ENCODE measurements at regions of chr9 and their contacts with region 1.

Region 1: GRCh38 chr9:89597711-89598625 is 6.8 kb upstream of the GADD45G start:
- DNase-seq: peak; percentile 73
- ATAC-seq: peak; percentile 55
- H3K4me3 Mint-ChIP-seq: no peak overlapping the region
- H3K27ac Mint-ChIP-seq: no peak overlapping the region
- H3K4me1 Mint-ChIP-seq: peaks cover 2% of the 10 kb centered on the region
- H3K27me3 Mint-ChIP-seq: peaks cover 50% of the 10 kb centered on the region

Region 2: GRCh38 chr9:89000973-89001916 is 596.7 kb before region 1 on chr9:
- CTCF ChIA-PET with region 1: no interaction called
- DNase-seq: peak; percentile 81
- ATAC-seq: peak; percentile 63
- H3K4me3 Mint-ChIP-seq: no peak overlapping the region
- H3K27ac Mint-ChIP-seq: no peak overlapping the region
- H3K4me1 Mint-ChIP-seq: peaks cover 2% of the 10 kb centered on the region
- H3K27me3 Mint-ChIP-seq: peaks cover 20% of the 10 kb centered on the region

Region 3: GRCh38 chr9:89576404-89576839 is 21.5 kb before region 1 on chr9:
- CTCF ChIA-PET with region 1: interaction called, 25 read pairs
- DNase-seq: no peak
- ATAC-seq: no peak
- H3K4me3 Mint-ChIP-seq: no peak overlapping the region
- H3K27ac Mint-ChIP-seq: no peak overlapping the region
- H3K4me1 Mint-ChIP-seq: peaks cover 22% of the 10 kb centered on the region
- H3K27me3 Mint-ChIP-seq: peaks cover 69% of the 10 kb centered on the region

Region 4: GRCh38 chr9:89919169-89919681 is 321.3 kb after region 1 on chr9:
- CTCF ChIA-PET with region 1: interaction called, 50 read pairs
- DNase-seq: peak; percentile 68
- ATAC-seq: peak; percentile 92
- H3K4me3 Mint-ChIP-seq: no peak overlapping the region
- H3K27ac Mint-ChIP-seq: no peak overlapping the region
- H3K4me1 Mint-ChIP-seq: peaks cover 9% of the 10 kb centered on the region
- H3K27me3 Mint-ChIP-seq: peaks cover 36% of the 10 kb centered on the region

Region 5: GRCh38 chr9:89999534-90000370 is 401.8 kb after region 1 on chr9:
- CTCF ChIA-PET with region 1: interaction called, 28 read pairs
- DNase-seq: peak; percentile 85
- ATAC-seq: peak; percentile 87
- H3K4me3 Mint-ChIP-seq: peak overlapping the region; percentile 12
- H3K27ac Mint-ChIP-seq: peak overlapping the region; percentile 26
- H3K4me1 Mint-ChIP-seq: peaks cover 26% of the 10 kb centered on the region
- H3K27me3 Mint-ChIP-seq: peaks cover 17% of the 10 kb centered on the region

Region 6: DNA sequence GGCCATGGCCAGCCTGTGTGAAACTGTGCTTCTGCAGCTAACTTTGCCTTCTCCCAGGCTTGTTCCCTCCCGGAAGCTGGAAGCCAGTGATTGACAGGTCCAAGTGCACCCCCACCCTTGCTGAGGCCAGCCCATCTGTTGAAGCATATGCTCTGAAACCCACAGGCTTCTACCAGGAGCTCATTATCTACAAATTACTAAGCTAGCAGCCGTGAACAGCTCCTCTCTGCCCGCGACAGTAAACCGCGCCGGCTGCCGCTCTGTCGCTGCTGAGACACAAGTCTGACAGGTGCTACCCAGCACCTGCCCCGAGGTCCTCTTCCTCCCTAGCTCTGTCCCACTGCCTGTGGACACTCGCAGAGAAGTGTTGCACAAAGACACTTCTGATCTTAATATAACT is 497.7 kb after region 1 on chr9:
- CTCF ChIA-PET with region 1: interaction called, 168 read pairs
- DNase-seq: peak; percentile 59
- ATAC-seq: peak; percentile 69
- H3K4me3 Mint-ChIP-seq: no peak overlapping the region
- H3K27ac Mint-ChIP-seq: no peak overlapping the region
- H3K4me1 Mint-ChIP-seq: peaks cover 19% of the 10 kb centered on the region
- H3K27me3 Mint-ChIP-seq: peaks cover 51% of the 10 kb centered on the region

Region 7: GRCh38 chr9:90102292-90102901 is 504.4 kb after region 1 on chr9:
- CTCF ChIA-PET with region 1: interaction called, 168 read pairs
- DNase-seq: peak; percentile 87
- ATAC-seq: peak; percentile 98
- H3K4me3 Mint-ChIP-seq: no peak overlapping the region
- H3K27ac Mint-ChIP-seq: no peak overlapping the region
- H3K4me1 Mint-ChIP-seq: peaks cover 22% of the 10 kb centered on the region
- H3K27me3 Mint-ChIP-seq: peaks cover 16% of the 10 kb centered on the region

Measured in activated CD8-positive, alpha-beta memory T cell treated with anti-CD3 and anti-CD28 coated beads, Interleukin-2, amount 10 ng/mL, durations not matched to agents 7 days and 5 days (primary cell).